ENCODE measurements at regions of chr2 and their contacts with region 1.

Region 1: DNA sequence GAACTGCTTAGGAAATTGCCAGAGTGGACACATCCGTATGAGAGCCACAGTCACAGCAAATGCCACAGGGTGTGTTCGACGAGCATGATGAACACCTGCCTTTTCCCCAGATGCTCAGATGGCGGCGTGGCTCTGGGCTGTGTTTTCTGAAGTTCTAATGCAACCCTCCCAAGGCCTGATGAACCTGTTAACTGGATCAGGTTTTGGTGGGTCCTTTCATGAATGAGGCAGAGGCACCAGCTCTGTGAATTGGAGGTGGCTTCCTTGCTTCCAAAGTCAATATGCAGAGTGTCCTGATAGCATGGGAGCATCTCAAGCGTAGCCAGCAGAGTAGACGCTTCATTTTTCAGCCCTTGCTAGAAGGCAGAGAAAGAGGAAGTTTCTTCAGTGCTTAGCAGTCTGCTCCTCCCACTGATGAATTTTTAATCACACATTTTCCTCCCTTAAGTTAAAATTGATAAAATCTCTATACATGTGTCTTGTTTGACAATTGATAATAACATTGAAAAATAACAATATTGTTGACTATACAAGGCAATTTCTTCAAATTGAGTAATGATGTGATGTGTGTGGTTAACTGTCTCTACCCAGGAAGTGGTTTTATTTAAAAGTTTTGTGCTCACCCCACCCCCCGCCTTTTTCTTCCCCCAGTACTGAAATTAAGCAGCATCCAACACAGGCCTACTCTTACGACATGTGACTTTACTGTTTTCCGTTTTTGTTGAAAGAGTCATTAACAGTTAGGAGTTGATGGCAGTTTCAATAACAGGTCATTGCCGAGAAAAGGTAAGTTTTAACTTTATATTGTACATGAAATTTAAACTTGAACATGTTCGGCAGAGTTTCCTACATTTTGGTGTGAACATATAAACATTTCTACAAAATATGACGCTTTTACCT is at the start of gene ARHGAP15:
- DNase-seq: peak; percentile 55
- H3K4me3 Mint-ChIP-seq: peak within 1 kb of the TSS; percentile 75
- H3K27ac Mint-ChIP-seq: peak within 1 kb of the TSS; percentile 93
- H3K4me1 Mint-ChIP-seq: peaks cover 40% of the 10 kb centered on the region
- H3K27me3 Mint-ChIP-seq: no peaks in the 10 kb centered on the region
- total RNA-seq, gene ARHGAP15: 64.3 and 65.3 TPM in 2 replicates

Region 2: GRCh38 chr2:143117225-143117624 is 11.7 kb before region 1 on chr2:
- intact Hi-C with region 1: loop called (anchors 1 kb)
- DNase-seq: no peak
- H3K4me3 Mint-ChIP-seq: no peak overlapping the region
- H3K27ac Mint-ChIP-seq: no peak overlapping the region
- H3K4me1 Mint-ChIP-seq: peaks cover 40% of the 10 kb centered on the region
- H3K27me3 Mint-ChIP-seq: no peaks in the 10 kb centered on the region

Region 3: GRCh38 chr2:143140864-143141661 is 12.1 kb after region 1 on chr2:
- intact Hi-C with region 1: loop called (anchors 1 kb)
- DNase-seq: no peak
- H3K4me3 Mint-ChIP-seq: no peak overlapping the region
- H3K27ac Mint-ChIP-seq: peak overlapping the region; percentile 84
- H3K4me1 Mint-ChIP-seq: peaks cover 93% of the 10 kb centered on the region
- H3K27me3 Mint-ChIP-seq: no peaks in the 10 kb centered on the region

Region 4: DNA sequence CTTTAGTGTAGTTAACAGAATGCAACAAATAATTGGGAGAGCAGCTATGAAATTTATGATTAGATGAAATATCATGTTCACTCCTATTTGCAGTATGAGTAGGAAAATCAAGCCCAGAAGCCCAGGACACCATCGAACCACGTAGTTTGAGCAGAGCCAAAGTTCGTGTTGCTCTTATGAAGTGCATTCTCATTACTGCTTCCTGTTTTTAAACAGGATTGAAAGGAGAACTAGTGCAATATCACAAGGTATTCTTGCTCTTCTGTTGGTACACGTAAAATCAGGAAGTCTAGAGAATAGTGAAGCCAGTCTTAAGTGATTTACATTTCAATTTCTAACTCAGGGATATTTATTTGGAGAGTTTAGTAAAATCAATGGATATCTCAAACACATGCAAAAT is 21.4 kb after region 1 on chr2:
- intact Hi-C with region 1: loop called (anchors 1 kb)
- DNase-seq: no peak
- H3K4me3 Mint-ChIP-seq: peak overlapping the region; percentile 32
- H3K27ac Mint-ChIP-seq: peak overlapping the region; percentile 80
- H3K4me1 Mint-ChIP-seq: peaks cover 88% of the 10 kb centered on the region
- H3K27me3 Mint-ChIP-seq: no peaks in the 10 kb centered on the region

Region 5: GRCh38 chr2:143177096-143177786 is 48.3 kb after region 1 on chr2:
- intact Hi-C with region 1: loop called (anchors 2 kb)
- DNase-seq: no peak
- H3K4me3 Mint-ChIP-seq: peak overlapping the region; percentile 78
- H3K27ac Mint-ChIP-seq: peak overlapping the region; percentile 85
- H3K4me1 Mint-ChIP-seq: peaks cover 53% of the 10 kb centered on the region
- H3K27me3 Mint-ChIP-seq: no peaks in the 10 kb centered on the region